Aorta (tissue), 5 donors: ENCODE measurements at regions of chrX and their contacts with region 1.

Region 1: DNA sequence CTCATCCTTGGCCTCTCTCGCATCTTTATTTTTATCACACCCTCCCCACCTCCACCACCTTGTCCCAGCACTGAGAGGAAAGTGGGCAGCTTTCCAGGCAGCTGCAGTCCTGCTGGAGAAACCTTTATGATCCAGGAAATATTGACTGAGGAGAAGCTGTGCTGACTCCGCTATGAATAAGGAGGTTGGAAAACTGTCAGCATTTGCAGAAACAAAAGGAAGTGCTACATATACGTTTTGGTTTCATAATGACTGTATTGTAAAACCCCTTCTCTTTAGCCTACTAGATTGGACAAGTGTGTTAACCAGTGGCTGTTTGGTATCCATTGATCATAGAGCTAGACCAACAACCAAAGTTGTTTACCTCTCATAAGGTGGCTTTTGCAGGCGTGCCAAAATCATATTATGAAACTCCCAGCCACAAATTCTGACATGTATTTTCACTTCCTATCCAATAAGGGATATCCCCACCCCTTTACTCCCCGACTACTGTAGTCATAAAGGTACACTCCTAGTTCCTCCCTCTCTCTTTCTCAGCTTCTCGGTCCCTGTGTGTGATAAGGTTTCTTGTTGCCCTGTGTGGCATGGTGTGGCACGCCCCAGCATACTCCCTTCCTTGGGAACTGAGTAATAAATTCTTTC is 88.4 kb downstream of the GPR143 start:
- DNase-seq: no peak
- ATAC-seq: no peak
- H3K4me3 ChIP-seq: no peak overlapping the region
- H3K27ac ChIP-seq: no peak overlapping the region
- H3K4me1 ChIP-seq: peaks cover 0 to 2% of the 10 kb centered on the region in 2 donors
- H3K27me3 ChIP-seq: no peaks in the 10 kb centered on the region

Region 2: DNA sequence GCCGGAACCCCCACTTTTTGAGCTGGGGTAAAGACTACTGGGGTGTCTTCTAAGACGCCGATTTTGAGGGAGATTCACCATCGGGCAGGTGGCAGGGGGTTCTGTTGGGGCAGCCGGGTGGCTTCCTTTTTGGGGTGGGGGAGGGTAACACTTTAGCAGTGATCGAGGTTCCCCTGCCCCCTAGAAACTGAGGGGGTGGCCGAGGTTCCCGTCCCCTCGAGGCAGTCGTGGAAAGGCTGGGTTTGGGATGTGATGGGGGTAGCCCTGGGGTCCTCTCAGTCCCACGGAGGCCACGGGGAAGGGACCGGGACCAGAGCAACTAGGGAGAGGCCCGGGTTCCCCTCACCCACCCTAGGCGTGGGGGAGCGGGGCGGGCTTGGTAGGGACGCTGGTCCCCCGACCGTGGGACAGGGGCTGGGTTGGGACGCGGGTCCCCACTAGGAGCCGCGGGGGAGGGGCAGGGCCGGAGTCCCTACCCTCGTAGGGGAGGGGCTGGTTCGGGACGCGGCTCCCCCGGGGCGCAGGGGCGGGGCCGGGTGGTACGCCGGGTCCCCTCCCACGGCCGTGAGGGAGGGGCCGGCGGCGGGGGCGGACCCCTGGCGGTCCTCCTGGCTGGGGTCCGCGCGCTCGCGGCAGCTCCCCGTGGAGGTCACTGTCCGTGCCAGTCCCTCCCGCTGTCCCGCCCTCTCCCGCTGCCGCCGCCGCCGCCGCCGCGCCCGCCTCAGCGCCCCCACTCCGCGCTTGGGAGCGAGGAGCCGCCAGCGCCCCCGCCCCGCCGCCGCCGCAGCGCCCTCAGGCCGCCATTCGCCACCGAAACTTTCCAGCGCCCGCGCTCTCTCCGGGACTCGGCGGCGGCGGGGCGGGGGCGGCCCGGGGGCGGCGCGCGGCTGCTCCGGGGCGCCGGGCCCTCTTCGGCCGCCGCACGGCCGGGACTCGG is 212.5 kb before region 1 on chrX and contains the start of gene TBL1X:
- intact Hi-C with region 1: loop called in 1 of 2 experiments (anchors 10 kb)
- DNase-seq: peak; percentile 69 to 87
- ATAC-seq: peak; percentile 71
- H3K4me3 ChIP-seq: peak within 1 kb of the TSS; percentile 95 to 99
- H3K27ac ChIP-seq: peak within 1 kb of the TSS; percentile 72 to 82
- H3K4me1 ChIP-seq: no peaks in the 10 kb centered on the region
- H3K27me3 ChIP-seq: no peaks in the 10 kb centered on the region
- total RNA-seq, gene TBL1X: 42.1 to 81.2 TPM

Region 3: GRCh38 chrX:9530848-9531274 is 146.4 kb before region 1 on chrX:
- intact Hi-C with region 1: loop called in 1 of 2 experiments (anchors 10 kb)
- DNase-seq: peak; percentile 77 to 80
- ATAC-seq: peak; percentile 65
- H3K4me3 ChIP-seq: no peak overlapping the region
- H3K27ac ChIP-seq: no peak overlapping the region
- H3K4me1 ChIP-seq: peaks cover 0 to 1% of the 10 kb centered on the region in 2 donors
- H3K27me3 ChIP-seq: no peaks in the 10 kb centered on the region

Region 4: GRCh38 chrX:9566150-9566621 is 111.0 kb before region 1 on chrX:
- intact Hi-C with region 1: loop called in 1 of 2 experiments (anchors 10 kb)
- DNase-seq: peak; percentile 84 to 86
- ATAC-seq: peak; percentile 44
- H3K4me3 ChIP-seq: no peak overlapping the region
- H3K27ac ChIP-seq: no peak overlapping the region
- H3K4me1 ChIP-seq: peaks cover 0 to 2% of the 10 kb centered on the region in 2 donors
- H3K27me3 ChIP-seq: no peaks in the 10 kb centered on the region

Region 5: DNA sequence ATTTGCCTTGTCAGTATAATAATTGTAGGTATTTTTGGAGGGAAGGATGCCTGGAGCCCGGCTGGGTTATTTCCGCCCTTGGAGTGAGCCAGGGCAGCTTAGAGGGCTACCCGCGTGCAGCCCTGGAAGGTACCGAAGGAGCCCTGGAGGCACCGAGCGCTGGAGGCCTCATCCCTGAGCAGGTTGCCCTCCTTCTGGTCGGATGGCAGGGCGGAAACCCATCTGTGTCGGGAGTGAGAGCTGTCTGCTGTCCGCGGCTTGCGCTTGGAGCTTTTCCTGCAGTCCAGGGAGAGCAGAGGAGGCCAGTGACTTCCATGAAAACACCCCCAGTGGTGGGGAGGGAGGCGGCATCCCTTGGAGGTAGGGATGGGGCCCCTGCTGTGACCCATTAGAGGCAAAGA is 90.2 kb before region 1 on chrX:
- intact Hi-C with region 1: no loop called
- DNase-seq: no peak
- ATAC-seq: peak; percentile 36
- H3K4me3 ChIP-seq: no peak overlapping the region
- H3K27ac ChIP-seq: no peak overlapping the region
- H3K4me1 ChIP-seq: no peaks in the 10 kb centered on the region
- H3K27me3 ChIP-seq: no peaks in the 10 kb centered on the region